Activated T-helper 1 cell treated with anti-CD3 and anti-CD28 coated beads, Interleukin-12 subunit alpha, Interleukin-12 subunit beta, Interleukin-2, Interleukin-4 antibody, amounts not matched to agents 30 ng/mL and 10 ng/mL and 1 ng/mL, durations not matched to agents 14 hours and 24 hours and 36 hours (primary cell): ENCODE measurements at regions of chr3 and their contacts with region 1.

Region 1: GRCh38 chr3:57397175-57398026 is 104.9 kb upstream of the ASB14 start:
- DNase-seq: peak; percentile 48
- H3K4me3 Mint-ChIP-seq: no peak overlapping the region
- H3K27ac Mint-ChIP-seq: no peak overlapping the region
- H3K4me1 Mint-ChIP-seq: peaks cover 10% of the 10 kb centered on the region
- H3K27me3 Mint-ChIP-seq: peaks cover 13% of the 10 kb centered on the region

Region 2: GRCh38 chr3:57169872-57170623 is 227.4 kb before region 1 on chr3:
- intact Hi-C with region 1: loop called (anchors 5 kb)
- DNase-seq: peak; percentile 33
- H3K4me3 Mint-ChIP-seq: peak overlapping the region; percentile 64
- H3K27ac Mint-ChIP-seq: no peak overlapping the region
- H3K4me1 Mint-ChIP-seq: peaks cover 5% of the 10 kb centered on the region
- H3K27me3 Mint-ChIP-seq: peaks cover 52% of the 10 kb centered on the region

Region 3: GRCh38 chr3:57530071-57530608 is 132.7 kb after region 1 on chr3:
- intact Hi-C with region 1: no loop called
- DNase-seq: no peak
- H3K4me3 Mint-ChIP-seq: no peak overlapping the region
- H3K27ac Mint-ChIP-seq: no peak overlapping the region
- H3K4me1 Mint-ChIP-seq: no peaks in the 10 kb centered on the region
- H3K27me3 Mint-ChIP-seq: peaks cover 13% of the 10 kb centered on the region

Region 4: DNA sequence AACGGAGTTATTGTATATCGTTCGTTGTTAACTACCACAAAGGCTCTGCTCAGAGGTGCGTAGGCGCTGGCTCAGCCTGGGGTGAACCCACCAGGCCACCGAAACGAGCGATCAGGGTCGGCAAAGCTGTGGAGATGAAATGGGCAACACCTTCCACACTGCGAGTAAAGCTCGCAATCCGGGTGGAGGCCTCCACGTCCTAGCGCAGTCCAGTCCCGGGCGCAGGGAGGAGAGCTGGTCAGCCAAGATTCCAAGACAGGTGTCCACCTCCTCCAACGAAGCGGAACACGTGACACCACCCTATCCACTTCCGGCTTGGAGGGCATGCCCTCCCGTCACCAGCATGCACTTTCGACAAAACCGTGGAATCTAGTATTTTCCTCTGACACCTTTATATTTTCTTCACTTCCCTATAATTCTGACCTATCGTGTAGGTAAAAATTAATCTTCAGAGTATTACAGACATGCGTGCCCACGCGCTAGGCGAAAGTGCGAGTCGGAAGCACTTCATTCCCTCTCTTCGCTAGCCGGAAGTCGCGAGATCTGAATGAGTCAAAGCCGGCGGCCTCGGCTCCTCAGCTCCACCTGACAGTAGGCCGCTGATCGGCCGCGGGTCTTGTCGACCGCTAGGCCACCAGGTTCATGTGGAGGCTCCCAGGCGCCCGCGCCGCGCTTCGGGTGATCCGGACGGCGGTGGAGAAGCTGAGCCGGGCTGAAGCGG is 158.5 kb after region 1 on chr3 and contains the start of gene PDE12:
- intact Hi-C with region 1: loop called (anchors 1 kb)
- DNase-seq: peak; percentile 78
- H3K4me3 Mint-ChIP-seq: peak within 1 kb of the TSS; percentile 100
- H3K27ac Mint-ChIP-seq: peak within 1 kb of the TSS; percentile 100
- H3K4me1 Mint-ChIP-seq: peaks cover 47% of the 10 kb centered on the region
- H3K27me3 Mint-ChIP-seq: no peaks in the 10 kb centered on the region
- total RNA-seq, gene PDE12: 34.7 and 34.9 TPM in 2 replicates

Region 5: GRCh38 chr3:57637391-57637790 is 240.0 kb after region 1 on chr3:
- intact Hi-C with region 1: loop called (anchors 10 kb)
- DNase-seq: no peak
- H3K4me3 Mint-ChIP-seq: no peak overlapping the region
- H3K27ac Mint-ChIP-seq: no peak overlapping the region
- H3K4me1 Mint-ChIP-seq: no peaks in the 10 kb centered on the region
- H3K27me3 Mint-ChIP-seq: no peaks in the 10 kb centered on the region

Region 6: GRCh38 chr3:57692259-57693147 is 295.1 kb after region 1 on chr3 and contains the start of gene DENND6A:
- intact Hi-C with region 1: no loop called
- DNase-seq: peak; percentile 94
- H3K4me3 Mint-ChIP-seq: peak within 1 kb of the TSS; percentile 91
- H3K27ac Mint-ChIP-seq: peak within 1 kb of the TSS; percentile 91
- H3K4me1 Mint-ChIP-seq: peaks cover 30% of the 10 kb centered on the region
- H3K27me3 Mint-ChIP-seq: peaks cover 3% of the 10 kb centered on the region
- total RNA-seq, gene DENND6A: 23.6 and 26.2 TPM in 2 replicates

Region 7: DNA sequence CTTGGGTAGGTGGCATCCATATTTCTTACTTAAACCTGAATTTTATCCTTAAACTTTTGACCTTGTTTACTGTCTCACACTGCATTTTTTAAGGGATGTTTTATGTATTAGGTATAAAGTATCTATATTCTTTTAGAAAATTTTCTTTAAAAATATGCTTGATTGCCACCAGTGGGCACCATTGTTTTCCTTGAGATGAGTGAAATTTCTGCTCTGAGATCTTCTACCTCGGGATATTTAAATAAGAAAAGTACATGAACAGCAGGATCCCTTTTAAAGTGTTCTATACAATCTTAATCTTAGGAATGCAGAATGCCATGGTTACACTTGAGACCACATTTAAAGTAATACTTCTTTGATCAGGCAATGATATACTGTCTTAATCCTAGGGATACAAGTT is 467.5 kb after region 1 on chr3:
- intact Hi-C with region 1: loop called (anchors 5 kb)
- DNase-seq: no peak
- H3K4me3 Mint-ChIP-seq: no peak overlapping the region
- H3K27ac Mint-ChIP-seq: no peak overlapping the region
- H3K4me1 Mint-ChIP-seq: no peaks in the 10 kb centered on the region
- H3K27me3 Mint-ChIP-seq: no peaks in the 10 kb centered on the region

Region 8: DNA sequence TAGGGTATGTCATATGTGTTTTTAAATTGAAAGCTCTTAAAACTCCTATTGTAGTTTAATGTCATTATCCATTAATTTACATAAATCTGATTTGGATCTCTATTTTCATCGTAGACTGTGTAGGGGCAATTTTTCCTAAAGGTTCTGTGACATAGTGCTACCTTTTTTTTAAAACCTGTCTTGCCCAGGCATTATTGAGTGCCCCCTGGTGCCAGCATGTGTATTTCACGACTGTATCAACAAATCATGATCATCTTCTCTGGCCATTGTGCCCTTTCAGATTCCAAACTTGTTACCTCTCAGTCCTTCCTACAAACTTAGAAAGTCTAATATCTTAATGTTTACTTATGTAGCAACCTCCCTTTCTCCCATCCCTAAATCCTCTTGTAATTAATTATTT is 513.6 kb after region 1 on chr3:
- intact Hi-C with region 1: loop called (anchors 1 kb)
- DNase-seq: no peak
- H3K4me3 Mint-ChIP-seq: no peak overlapping the region
- H3K27ac Mint-ChIP-seq: no peak overlapping the region
- H3K4me1 Mint-ChIP-seq: no peaks in the 10 kb centered on the region
- H3K27me3 Mint-ChIP-seq: no peaks in the 10 kb centered on the region

Region 9: GRCh38 chr3:58217209-58217811 is 819.9 kb after region 1 on chr3:
- intact Hi-C with region 1: loop called (anchors 5 kb)
- DNase-seq: peak; percentile 41
- H3K4me3 Mint-ChIP-seq: no peak overlapping the region
- H3K27ac Mint-ChIP-seq: peak overlapping the region; percentile 46
- H3K4me1 Mint-ChIP-seq: peaks cover 37% of the 10 kb centered on the region
- H3K27me3 Mint-ChIP-seq: peaks cover 11% of the 10 kb centered on the region